Activated CD4-positive, alpha-beta memory T cell treated with anti-CD3 and anti-CD28 coated beads for 36 hours (primary cell): ENCODE measurements at regions of chr4 and their contacts with region 1.

Region 1: DNA sequence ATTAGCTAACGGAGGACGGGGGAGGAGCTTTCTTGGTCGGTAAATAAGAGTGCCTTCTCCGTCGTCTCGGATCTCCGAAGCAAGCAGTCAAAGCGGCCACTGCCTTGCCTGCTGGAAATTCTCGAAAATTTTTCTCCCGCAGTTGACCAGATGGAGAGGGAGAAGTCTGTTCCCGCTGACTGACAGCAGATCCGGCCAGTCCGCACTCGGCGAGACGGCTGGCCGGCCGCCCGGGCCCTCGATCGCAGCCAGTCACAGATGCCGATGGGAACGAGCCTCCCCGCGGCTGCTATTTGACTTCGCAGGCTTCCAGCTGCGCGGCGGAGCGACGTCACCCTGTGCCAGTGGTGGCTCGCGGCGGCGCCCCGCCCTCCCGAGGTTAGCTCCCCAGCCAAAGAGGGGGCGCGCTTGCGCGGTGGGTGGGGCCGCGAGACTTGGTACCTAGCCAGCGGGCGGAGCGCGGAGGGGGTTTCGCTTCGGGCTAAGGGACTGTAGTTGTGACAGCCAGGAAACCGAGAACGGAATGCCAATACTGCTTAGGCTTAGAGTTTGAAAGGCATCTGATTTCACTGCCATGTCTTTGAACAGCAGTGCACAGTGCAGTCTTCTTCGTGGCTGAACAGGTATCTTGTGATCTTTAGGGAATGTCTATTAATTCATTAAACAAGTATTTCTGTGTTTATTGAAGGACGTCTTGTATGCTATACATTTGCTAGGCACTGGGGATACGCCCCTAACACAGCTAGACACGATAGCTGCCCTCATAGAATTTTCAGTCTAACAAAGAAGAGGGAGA is at the start of gene PPM1K:
- DNase-seq: peak; percentile 100
- H3K4me3 Mint-ChIP-seq: peak within 1 kb of the TSS; percentile 99
- H3K27ac Mint-ChIP-seq: peak within 1 kb of the TSS; percentile 99
- H3K4me1 Mint-ChIP-seq: peaks cover 36% of the 10 kb centered on the region
- H3K27me3 Mint-ChIP-seq: no peaks in the 10 kb centered on the region
- total RNA-seq, gene PPM1K: 63.7 to 65.5 TPM

Region 2: DNA sequence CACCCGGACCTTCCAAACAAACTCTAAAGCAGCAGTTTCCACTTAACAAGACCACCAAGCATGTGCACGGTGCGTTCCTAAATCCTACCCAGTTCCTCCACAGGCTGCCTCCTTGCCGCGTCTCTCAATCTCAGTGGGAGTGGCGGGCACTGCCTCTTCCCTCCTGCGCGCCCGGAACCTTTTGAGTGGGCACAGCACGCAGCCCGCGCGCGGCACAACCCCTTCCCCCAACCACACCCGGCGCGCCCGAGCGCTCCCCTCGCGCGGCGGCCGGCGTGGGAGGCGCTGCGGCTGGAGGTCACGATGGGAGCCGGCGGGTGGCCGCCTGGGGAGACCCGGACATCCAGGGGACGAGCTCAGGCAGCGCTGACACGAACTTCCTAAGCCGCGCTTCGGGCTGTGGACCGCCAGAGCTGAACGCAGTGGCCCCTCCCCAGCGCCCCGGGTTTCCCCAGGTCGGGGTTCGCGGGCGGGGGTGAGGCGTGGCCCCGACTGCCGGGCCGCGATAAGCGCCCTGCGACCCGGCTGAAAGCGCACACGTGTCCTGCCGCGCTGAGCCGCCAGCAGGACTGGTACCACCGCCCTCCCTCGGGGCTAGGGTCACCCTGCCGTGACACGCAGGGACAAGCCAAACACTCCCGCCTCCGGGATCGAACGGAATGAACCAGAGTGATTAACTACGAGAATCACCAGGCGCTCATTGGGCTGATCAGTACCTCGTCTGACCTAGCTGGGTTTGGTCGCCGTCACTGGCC is 126.0 kb before region 1 on chr4 and contains the start of gene ABCG2:
- CTCF ChIA-PET with region 1: no interaction called
- POLR2A ChIA-PET with region 1: no interaction called
- intact Hi-C with region 1: loop called (anchors 1 kb)
- DNase-seq: peak; percentile 53
- H3K4me3 Mint-ChIP-seq: peak within 1 kb of the TSS; percentile 71
- H3K27ac Mint-ChIP-seq: peak within 1 kb of the TSS; percentile 55
- H3K4me1 Mint-ChIP-seq: peaks cover 14% of the 10 kb centered on the region
- H3K27me3 Mint-ChIP-seq: peaks cover 6% of the 10 kb centered on the region
- total RNA-seq, gene ABCG2: 0.75 to 0.81 TPM

Region 3: DNA sequence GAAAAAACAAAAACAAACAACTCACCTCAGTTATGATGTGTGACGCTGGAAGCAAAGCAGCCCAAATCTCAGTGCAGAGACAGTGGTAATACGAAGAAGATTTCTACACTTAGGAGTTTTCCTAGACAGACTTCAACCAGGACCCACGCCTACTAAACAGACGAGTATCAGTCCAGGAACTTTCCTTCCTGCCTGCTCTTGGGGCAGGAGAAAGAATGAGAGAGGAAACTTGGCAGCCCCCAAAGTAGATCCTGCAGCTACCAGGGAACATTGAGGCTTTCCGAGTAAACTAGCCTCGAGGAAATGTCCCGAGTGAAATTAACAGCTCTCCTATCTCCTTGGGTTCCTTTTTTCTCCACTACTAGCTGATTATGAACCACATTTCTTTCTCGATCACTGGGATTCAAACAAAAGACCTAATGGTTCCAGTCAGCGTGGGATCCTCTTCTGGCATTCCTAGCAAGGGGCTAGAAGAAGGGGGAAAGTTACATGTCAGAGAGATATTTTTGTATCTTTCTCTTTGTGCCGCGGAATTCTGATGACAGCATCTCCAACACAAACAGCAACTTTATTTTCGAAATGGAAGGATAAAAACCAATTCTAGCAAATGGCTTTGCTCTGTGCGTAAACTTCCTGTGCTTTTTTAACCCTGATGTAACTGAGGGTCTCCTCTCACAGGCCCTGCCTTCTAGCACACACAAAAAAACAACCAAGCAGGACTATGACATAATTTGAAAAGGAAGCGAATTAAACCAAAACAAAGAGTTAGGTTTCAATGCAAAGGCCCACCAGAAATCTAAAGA is 53.5 kb before region 1 on chr4:
- CTCF ChIA-PET with region 1: no interaction called
- POLR2A ChIA-PET with region 1: interaction called, 3 read pairs
- intact Hi-C with region 1: loop called (anchors 5 kb)
- DNase-seq: no peak
- H3K4me3 Mint-ChIP-seq: no peak overlapping the region
- H3K27ac Mint-ChIP-seq: peak overlapping the region; percentile 19
- H3K4me1 Mint-ChIP-seq: peaks cover 6% of the 10 kb centered on the region
- H3K27me3 Mint-ChIP-seq: no peaks in the 10 kb centered on the region

Region 4: DNA sequence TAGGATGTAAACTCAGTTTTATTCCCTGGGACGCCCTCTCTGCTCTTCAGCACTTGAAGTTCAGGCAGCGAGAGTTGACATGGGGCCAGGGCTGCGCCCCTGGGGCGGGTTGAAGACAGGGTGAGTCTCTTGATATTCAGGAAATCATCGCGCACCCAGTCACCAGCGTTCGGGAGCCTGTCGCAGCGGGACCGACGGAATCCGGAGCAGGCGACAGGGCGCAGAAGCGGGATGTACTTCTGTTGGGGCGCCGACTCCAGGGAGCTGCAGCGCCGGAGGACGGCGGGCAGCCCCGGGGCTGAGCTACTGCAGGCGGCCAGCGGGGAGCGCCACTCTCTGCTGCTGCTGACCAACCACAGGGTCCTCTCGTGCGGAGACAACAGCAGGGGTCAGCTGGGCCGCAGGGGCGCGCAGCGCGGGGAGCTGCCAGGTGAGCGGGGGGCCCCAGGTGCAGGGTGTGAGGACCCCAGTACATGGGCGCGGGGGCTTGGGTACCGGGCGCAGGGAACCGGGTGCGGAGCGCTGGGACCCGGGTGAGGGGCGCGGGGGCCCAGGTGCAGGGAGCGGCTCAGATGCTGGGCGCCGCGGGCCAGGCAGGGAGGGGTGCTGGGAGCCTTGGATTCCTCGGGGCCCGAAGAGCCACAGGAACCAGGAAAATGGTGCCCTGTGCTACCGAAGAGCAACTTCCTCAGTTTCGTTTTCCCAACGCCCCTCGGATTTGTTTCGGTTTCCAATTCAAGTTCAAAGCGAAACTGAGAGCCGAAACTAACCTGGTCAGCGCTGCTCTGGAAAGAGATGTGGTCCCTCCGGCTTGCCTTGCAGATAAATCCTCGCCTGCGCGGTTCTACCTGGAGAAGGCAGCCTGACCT is 94.3 kb after region 1 on chr4 and contains the start of gene HERC6:
- CTCF ChIA-PET with region 1: interaction called, 6 read pairs
- POLR2A ChIA-PET with region 1: interaction called, 14 read pairs
- intact Hi-C with region 1: loop called (anchors 1 kb)
- DNase-seq: peak; percentile 86
- H3K4me3 Mint-ChIP-seq: peak within 1 kb of the TSS; percentile 83
- H3K27ac Mint-ChIP-seq: peak within 1 kb of the TSS; percentile 85
- H3K4me1 Mint-ChIP-seq: peaks cover 49% of the 10 kb centered on the region
- H3K27me3 Mint-ChIP-seq: no peaks in the 10 kb centered on the region
- total RNA-seq, gene HERC6: 12.4 to 12.5 TPM

Region 5: DNA sequence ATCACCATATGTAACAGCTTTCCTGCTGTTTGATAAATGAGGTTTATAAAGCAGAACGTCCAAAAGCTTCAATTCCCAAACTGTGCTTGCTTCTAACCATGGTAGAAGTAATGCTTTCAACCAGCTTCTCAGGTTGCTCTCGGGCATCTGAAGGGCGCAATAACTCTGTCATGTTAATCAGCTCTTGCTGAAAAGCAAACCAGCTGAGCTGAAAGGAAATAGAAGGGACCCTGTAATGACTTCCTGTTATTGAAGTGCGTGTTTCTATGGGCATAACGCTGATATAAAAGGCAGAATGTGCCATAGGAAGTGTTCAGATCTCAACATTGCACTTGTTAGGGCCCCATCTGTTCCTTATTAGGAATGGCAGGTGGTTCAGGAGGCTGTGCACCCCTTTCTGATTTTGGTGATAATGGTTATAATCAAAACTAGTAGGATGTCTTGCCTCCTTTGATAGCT is 328.8 kb after region 1 on chr4:
- CTCF ChIA-PET with region 1: no interaction called
- POLR2A ChIA-PET with region 1: interaction called, 3 read pairs
- intact Hi-C with region 1: loop called (anchors 1 kb)
- DNase-seq: peak; percentile 48
- H3K4me3 Mint-ChIP-seq: peak overlapping the region; percentile 58
- H3K27ac Mint-ChIP-seq: peak overlapping the region; percentile 87
- H3K4me1 Mint-ChIP-seq: peaks cover 78% of the 10 kb centered on the region
- H3K27me3 Mint-ChIP-seq: no peaks in the 10 kb centered on the region